ENCODE measurements at regions of chr10 and their contacts with region 1.

Region 1: DNA sequence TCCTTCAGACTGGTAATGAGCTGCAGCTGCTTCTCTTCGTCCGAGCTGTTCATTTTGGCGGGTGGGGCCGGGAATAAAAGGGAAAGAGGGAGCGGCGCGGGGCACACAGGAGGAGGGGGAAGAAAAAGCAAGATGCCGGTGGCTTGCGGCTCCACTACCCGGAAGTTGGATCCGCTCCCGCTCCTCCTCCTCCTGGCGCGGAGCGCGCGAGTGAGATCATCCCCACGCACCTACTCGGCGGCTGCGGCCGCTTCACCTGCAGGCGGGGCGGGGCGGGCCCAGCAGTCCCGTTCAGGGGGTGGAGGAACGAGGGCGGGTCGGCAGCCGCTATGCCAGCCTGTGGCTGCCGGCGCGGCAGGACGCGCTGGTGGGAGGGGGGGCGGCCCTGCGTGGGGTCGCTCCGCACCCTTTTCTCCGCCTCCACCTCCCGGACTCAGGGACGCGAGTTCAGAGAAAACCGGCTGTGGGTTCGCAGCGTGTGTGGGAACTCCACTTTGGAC is at the start of gene SHTN1:
- DNase-seq: no peak
- H3K4me3 ChIP-seq: peak within 1 kb of the TSS; percentile 78 to 96 (median 82)
- H3K27ac ChIP-seq: peak within 1 kb of the TSS; percentile 77
- H3K4me1 ChIP-seq: peaks cover 13% of the 10 kb centered on the region
- H3K27me3 ChIP-seq: no peaks in the 10 kb centered on the region
- CTCF ChIP-seq: no peak
- POLR2A ChIP-seq: no peak
- total RNA-seq, gene SHTN1: 29.7 and 36.5 TPM in 2 replicates

Region 2: GRCh38 chr10:116587878-116588591 is 417.0 kb before region 1 on chr10:
- CTCF ChIA-PET with region 1: no interaction called
- POLR2A ChIA-PET with region 1: no interaction called
- dilution Hi-C with region 1: no loop called
- intact Hi-C with region 1: no loop called
- DNase-seq: no peak
- H3K4me3 ChIP-seq: no peak overlapping the region
- H3K27ac ChIP-seq: no peak overlapping the region
- H3K4me1 ChIP-seq: no peaks in the 10 kb centered on the region
- H3K27me3 ChIP-seq: no peaks in the 10 kb centered on the region
- CTCF ChIP-seq: no peak
- POLR2A ChIP-seq: no peak

Region 3: GRCh38 chr10:116836902-116837523 is 168.1 kb before region 1 on chr10:
- CTCF ChIA-PET with region 1: interaction called, 10 read pairs
- POLR2A ChIA-PET with region 1: no interaction called
- dilution Hi-C with region 1: no loop called
- intact Hi-C with region 1: no loop called
- DNase-seq: peak; percentile 44
- H3K4me3 ChIP-seq: no peak overlapping the region
- H3K27ac ChIP-seq: no peak overlapping the region
- H3K4me1 ChIP-seq: no peaks in the 10 kb centered on the region
- H3K27me3 ChIP-seq: peaks cover 13 to 18% of the 10 kb centered on the region in 2 experiments
- CTCF ChIP-seq: peak; percentile 31 to 38
- POLR2A ChIP-seq: no peak

Region 4: GRCh38 chr10:116849248-116850057 is 155.6 kb before region 1 on chr10 and contains the start of gene ENO4:
- CTCF ChIA-PET with region 1: no interaction called
- POLR2A ChIA-PET with region 1: no interaction called
- dilution Hi-C with region 1: no loop called
- intact Hi-C with region 1: loop called (anchors 1 kb)
- DNase-seq: peak; percentile 89
- H3K4me3 ChIP-seq: peak within 1 kb of the TSS; percentile 8 to 64 (median 37)
- H3K27ac ChIP-seq: no peak within 1 kb of the TSS
- H3K4me1 ChIP-seq: peaks cover 2% of the 10 kb centered on the region
- H3K27me3 ChIP-seq: peaks cover 17 to 18% of the 10 kb centered on the region in 2 experiments
- CTCF ChIP-seq: no peak
- POLR2A ChIP-seq: no peak
- total RNA-seq, gene ENO4: not detected in 2 replicates

Region 5: DNA sequence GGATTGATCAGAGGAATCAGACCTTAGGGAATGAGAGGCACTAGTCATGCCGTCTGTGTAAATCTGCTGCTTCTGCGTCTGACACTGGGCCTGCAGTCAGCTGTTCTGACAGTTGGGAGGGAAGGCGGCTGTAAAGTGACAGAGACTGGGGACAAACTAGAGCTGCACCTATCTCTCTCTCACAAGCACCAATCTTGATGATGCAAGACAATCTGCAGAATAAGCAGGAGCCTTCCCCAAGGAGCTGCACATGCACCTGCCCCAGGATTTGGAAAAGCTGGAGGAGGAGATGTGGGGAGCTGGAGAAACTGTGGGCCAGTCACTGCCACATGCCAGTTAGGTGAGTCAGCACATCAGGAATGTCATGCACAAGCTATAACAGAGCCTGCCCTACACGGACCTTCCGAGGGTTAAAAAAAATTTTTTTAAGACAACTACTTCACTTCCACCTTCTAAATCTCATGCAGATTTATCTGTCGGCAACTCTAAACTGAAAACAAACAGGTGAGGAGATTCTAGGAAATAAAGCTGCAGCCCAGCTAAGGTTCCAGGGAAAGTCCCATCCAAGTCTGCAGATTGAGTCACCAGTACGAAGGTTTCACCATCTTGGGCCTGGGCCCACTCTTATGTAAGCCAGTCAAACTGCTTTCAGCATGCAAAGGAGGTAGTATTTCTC is 116.6 kb before region 1 on chr10:
- CTCF ChIA-PET with region 1: interaction called, 3 read pairs
- POLR2A ChIA-PET with region 1: no interaction called
- dilution Hi-C with region 1: no loop called
- intact Hi-C with region 1: loop called (anchors 1 kb)
- DNase-seq: peak; percentile 65
- H3K4me3 ChIP-seq: no peak overlapping the region
- H3K27ac ChIP-seq: peak overlapping the region; percentile 23
- H3K4me1 ChIP-seq: peaks cover 38% of the 10 kb centered on the region
- H3K27me3 ChIP-seq: no peaks in the 10 kb centered on the region
- CTCF ChIP-seq: no peak
- POLR2A ChIP-seq: no peak

Region 6: DNA sequence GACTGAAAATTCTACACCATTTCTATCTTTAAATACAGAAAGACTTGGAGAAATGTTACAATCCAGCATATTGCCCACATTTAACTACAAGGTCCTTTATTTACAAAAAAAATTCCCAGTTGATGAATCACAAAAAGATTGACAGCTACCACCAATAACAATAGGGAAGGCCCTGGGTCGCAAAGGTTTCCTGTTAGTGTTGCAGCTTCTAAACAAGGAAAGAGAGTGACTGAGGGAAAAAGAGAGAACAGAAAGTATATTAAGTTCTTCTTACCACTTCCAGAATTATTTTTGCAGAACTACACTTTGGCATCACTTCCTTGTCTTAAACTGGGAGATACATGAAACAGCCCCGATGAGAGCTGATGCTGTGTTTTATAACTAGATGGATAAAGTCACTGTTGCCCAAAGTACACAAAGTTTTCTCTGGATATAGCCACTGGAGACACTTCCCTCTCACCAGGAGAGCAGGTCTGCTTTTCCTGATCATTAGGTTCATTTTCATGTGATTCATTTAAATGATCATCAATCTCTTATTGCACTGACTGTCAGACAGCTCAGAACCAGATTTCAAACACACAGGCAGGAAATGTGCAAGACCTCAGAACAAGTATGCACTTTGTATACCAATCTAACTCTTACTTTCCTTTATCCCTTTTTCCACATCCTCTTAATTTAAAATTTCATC is 57.1 kb before region 1 on chr10:
- CTCF ChIA-PET with region 1: interaction called, 14 read pairs
- POLR2A ChIA-PET with region 1: interaction called, 3 read pairs
- dilution Hi-C with region 1: no loop called
- intact Hi-C with region 1: loop called (anchors 1 kb)
- DNase-seq: peak; percentile 88
- H3K4me3 ChIP-seq: peak overlapping the region in 2 of 3 experiments; percentile 6 to 8
- H3K27ac ChIP-seq: peak overlapping the region; percentile 88
- H3K4me1 ChIP-seq: peaks cover 23% of the 10 kb centered on the region
- H3K27me3 ChIP-seq: no peaks in the 10 kb centered on the region
- CTCF ChIP-seq: no peak
- POLR2A ChIP-seq: no peak

Region 7: GRCh38 chr10:116974473-116975005 is 30.5 kb before region 1 on chr10:
- CTCF ChIA-PET with region 1: interaction called, 8 read pairs
- POLR2A ChIA-PET with region 1: interaction called, 3 read pairs
- dilution Hi-C with region 1: no loop called
- intact Hi-C with region 1: loop called (anchors 1 kb)
- DNase-seq: peak; percentile 94
- H3K4me3 ChIP-seq: peak overlapping the region in 2 of 3 experiments; percentile 40 to 54
- H3K27ac ChIP-seq: peak overlapping the region; percentile 63
- H3K4me1 ChIP-seq: peaks cover 20% of the 10 kb centered on the region
- H3K27me3 ChIP-seq: no peaks in the 10 kb centered on the region
- CTCF ChIP-seq: no peak
- POLR2A ChIP-seq: no peak

Region 8: DNA sequence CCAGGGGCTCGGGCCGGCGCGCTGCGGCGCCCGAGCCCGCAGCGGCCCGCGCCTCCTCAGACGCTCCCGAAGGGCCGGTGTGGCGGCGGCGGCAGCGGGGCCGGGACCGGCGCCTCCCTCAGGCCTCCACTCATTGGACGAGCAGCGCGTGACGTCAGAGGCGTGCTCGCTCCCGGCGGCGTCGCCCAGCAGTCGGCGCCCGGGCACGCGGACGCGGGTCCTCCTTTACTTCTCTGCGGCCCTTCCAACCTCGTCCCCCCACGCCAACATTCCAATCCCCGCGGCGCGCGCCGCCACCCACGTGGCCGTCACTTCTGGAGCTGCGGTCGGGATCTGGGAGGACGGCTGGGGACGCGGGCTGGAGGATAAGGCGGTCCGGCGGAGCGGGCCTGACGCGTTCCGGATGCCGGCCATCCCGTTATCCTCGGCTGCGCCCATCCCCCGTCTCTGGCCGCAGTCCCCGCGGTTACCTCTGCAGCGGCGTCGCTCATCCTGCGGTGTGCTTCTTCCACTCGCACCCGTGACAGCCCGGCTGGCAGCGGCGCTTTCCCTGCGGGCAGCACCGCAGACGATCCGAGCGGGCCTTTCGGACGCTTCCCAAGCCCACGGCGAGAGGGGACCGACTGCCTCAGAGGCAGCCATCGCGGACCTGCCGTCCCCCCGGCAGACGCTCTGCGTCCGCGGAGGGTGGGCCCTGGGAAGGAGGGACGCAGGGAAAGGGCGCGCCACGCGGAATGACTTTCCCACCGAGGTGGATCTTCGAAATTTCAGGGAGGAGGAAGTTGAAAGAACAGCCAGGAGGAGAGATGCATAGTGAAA is 370.5 kb after region 1 on chr10 and contains the start of gene PDZD8:
- CTCF ChIA-PET with region 1: no interaction called
- POLR2A ChIA-PET with region 1: no interaction called
- dilution Hi-C with region 1: no loop called
- intact Hi-C with region 1: loop called (anchors 10 kb)
- DNase-seq: peak; percentile 92
- H3K4me3 ChIP-seq: peak within 1 kb of the TSS; percentile 47 to 88 (median 84)
- H3K27ac ChIP-seq: peak within 1 kb of the TSS; percentile 83
- H3K4me1 ChIP-seq: peaks cover 21% of the 10 kb centered on the region
- H3K27me3 ChIP-seq: peaks cover 22 to 29% of the 10 kb centered on the region in 2 experiments
- CTCF ChIP-seq: no peak
- POLR2A ChIP-seq: peak; percentile 87
- total RNA-seq, gene PDZD8: 21.9 and 22.6 TPM in 2 replicates

Region 9: DNA sequence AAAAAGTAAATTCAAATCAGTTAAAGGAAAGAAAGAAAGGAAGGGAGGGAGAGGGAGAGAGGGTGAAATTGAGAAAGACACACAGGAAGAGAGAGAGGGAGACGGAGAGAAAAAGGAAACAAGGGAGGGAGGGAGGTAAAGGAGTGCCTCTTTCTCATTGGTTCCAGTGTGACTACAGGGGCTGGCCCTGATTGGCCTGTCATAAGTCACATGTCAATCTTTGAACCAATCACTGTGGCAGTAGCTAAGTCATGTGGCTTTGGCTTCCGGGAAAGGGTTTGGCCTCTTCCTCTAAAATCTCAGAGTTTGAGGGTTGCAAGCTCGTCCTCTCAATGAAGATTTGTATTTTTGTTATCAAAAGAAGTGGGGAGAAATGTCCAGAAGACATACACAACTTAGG is 891.4 kb after region 1 on chr10:
- CTCF ChIA-PET with region 1: no interaction called
- POLR2A ChIA-PET with region 1: no interaction called
- dilution Hi-C with region 1: no loop called
- intact Hi-C with region 1: no loop called
- DNase-seq: no peak
- H3K4me3 ChIP-seq: no peak overlapping the region
- H3K27ac ChIP-seq: no peak overlapping the region
- H3K4me1 ChIP-seq: no peaks in the 10 kb centered on the region
- H3K27me3 ChIP-seq: no peaks in the 10 kb centered on the region
- CTCF ChIP-seq: no peak
- POLR2A ChIP-seq: no peak